Thyroid gland (tissue), 4 donors: ENCODE measurements at regions of chr2 and their contacts with region 1.

Region 1: DNA sequence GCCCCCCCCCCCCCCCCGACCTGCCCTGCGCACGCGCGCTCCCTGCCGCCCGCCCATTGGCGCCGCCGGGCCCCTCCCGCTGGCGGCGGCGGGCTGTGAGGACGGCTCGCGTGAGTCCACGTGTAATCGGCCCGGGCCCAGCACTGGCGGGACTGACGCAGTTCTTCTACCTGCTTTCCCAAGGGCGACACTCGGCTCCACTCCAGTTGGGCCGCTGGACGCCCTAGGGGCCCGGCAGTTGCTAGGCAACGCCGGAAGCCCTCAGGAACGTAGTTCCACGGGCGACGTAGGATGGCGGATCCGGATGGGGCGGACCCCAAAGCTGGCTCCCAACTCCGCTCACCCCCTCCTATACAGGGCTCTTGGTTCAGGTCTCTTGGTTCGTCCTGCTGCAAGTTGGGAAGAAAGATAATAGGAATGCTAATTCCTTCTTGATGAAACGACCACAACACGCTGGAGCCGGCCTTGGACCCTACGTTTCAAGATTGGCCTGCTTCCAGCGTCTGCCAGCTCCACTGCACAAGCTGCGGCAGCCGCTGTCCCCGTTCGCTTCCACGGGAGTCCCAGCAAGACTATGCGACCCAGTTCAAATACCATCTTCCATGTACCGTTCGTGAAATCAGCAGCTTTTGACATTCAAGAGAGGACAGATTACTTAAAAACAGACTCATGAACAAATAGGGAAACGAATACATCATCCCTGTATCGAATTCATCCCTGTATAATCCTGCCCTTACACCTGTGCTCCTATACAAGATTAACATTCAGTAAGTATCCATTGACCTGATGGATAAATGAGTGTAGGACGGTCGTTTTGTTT is 415 bp upstream of the MCFD2 start:
- DNase-seq: peak; percentile 98 to 99
- H3K4me3 ChIP-seq: peak overlapping the region; percentile 84 to 99 (median 87)
- H3K27ac ChIP-seq: peak overlapping the region; percentile 94 to 98 (median 97)
- H3K4me1 ChIP-seq: peaks cover 19 to 32% of the 10 kb centered on the region in 2 donors
- H3K27me3 ChIP-seq: no peaks in the 10 kb centered on the region
- CTCF ChIP-seq: peak in 1 of 6 experiments; percentile 3
- POLR2A ChIP-seq: peak in 1 of 2 donors; percentile 89

Region 2: DNA sequence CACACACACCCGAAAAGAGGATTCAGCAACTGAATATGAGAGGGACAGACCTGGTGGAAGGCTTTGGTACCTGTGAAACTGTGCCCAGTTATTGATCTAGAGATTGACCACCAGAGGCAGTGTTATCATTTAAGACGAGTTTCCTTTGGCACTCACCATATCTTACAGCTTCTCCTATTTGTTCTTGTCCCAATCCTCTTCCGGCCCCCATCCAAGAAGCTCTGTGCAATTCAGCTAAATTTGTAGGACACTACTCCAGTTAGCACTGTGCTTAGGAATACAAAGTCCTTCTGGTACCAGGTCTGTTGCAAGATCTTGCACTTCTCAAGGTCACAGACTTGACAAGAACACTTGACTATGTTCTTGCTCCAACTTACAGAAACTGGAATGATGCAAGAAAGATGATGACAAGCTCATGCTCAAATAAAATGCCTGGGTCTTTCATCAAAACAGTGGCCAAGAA is 258.9 kb before region 1 on chr2:
- intact Hi-C with region 1: no loop called
- DNase-seq: peak; percentile 54 to 70
- H3K4me3 ChIP-seq: no peak overlapping the region
- H3K27ac ChIP-seq: peak overlapping the region in 2 of 3 donors; percentile 21 to 51
- H3K4me1 ChIP-seq: peaks cover 9 to 12% of the 10 kb centered on the region in 2 donors
- H3K27me3 ChIP-seq: no peaks in the 10 kb centered on the region
- CTCF ChIP-seq: peak in 4 of 6 experiments; percentile 35 to 59 (median 48)
- POLR2A ChIP-seq: no peak

Region 3: GRCh38 chr2:47034973-47035609 is 119.1 kb after region 1 on chr2:
- intact Hi-C with region 1: no loop called
- DNase-seq: peak in 1 of 2 donors; percentile 42
- H3K4me3 ChIP-seq: no peak overlapping the region
- H3K27ac ChIP-seq: peak overlapping the region; percentile 90 to 95 (median 92)
- H3K4me1 ChIP-seq: peaks cover 54 to 83% of the 10 kb centered on the region in 2 donors
- H3K27me3 ChIP-seq: no peaks in the 10 kb centered on the region
- CTCF ChIP-seq: no peak
- POLR2A ChIP-seq: no peak

Region 4: GRCh38 chr2:47323009-47323821 is 407.2 kb after region 1 on chr2:
- intact Hi-C with region 1: loop called (anchors 10 kb)
- DNase-seq: peak; percentile 76 to 78
- H3K4me3 ChIP-seq: no peak overlapping the region
- H3K27ac ChIP-seq: no peak overlapping the region
- H3K4me1 ChIP-seq: peaks cover 0 to 4% of the 10 kb centered on the region in 2 donors
- H3K27me3 ChIP-seq: no peaks in the 10 kb centered on the region
- CTCF ChIP-seq: peak; percentile 83 to 100 (median 96)
- POLR2A ChIP-seq: no peak